Activated CD8-positive, alpha-beta memory T cell treated with anti-CD3 and anti-CD28 coated beads, Interleukin-2, amount 10 ng/mL, durations not matched to agents 7 days and 5 days (primary cell): ENCODE measurements at regions of chr13 and their contacts with region 1.

Region 1: DNA sequence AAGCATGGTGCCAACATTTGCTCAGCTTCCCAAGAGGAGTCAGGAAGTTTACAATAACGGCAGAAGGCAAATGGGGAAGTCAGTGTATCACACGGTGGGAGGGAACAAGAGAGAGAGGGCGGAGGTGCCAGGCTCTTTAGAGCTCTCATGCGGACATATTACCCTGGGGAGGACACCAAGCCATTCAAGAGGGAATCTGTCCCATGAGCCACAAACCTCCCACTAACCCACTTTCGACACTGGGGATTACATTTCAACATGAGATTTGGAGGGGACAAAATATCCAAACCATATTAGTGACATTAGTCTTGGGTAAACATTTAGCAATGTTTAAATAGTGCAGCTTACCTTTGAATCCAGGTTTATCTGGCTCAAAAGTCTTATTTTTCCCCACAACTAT is 69.9 kb downstream of the SLAIN1 start:
- DNase-seq: no peak
- ATAC-seq: no peak
- H3K4me3 Mint-ChIP-seq: no peak overlapping the region
- H3K27ac Mint-ChIP-seq: no peak overlapping the region
- H3K4me1 Mint-ChIP-seq: peaks cover 4% of the 10 kb centered on the region
- H3K27me3 Mint-ChIP-seq: no peaks in the 10 kb centered on the region

Region 2: GRCh38 chr13:79382545-79383289 is 1615.3 kb after region 1 on chr13:
- CTCF ChIA-PET with region 1: interaction called, 10 read pairs
- DNase-seq: no peak
- ATAC-seq: peak; percentile 52
- H3K4me3 Mint-ChIP-seq: peak overlapping the region; percentile 70
- H3K27ac Mint-ChIP-seq: peak overlapping the region; percentile 86
- H3K4me1 Mint-ChIP-seq: peaks cover 59% of the 10 kb centered on the region
- H3K27me3 Mint-ChIP-seq: no peaks in the 10 kb centered on the region